ENCODE measurements at regions of chr11 and their contacts with region 1.

Region 1: GRCh38 chr11:9265211-9266131 is at the start of gene DENND5A:
- DNase-seq: peak; percentile 94
- H3K4me3 ChIP-seq: peak within 1 kb of the TSS; percentile 94 to 99 (median 98)
- H3K27ac ChIP-seq: peak within 1 kb of the TSS; percentile 93 to 99 (median 98)
- H3K4me1 ChIP-seq: peaks cover 0 to 35% (median 24%) of the 10 kb centered on the region in 4 donors
- H3K27me3 ChIP-seq: no peaks in the 10 kb centered on the region
- CTCF ChIP-seq: no peak
- EP300 ChIP-seq: no peak
- POLR2A ChIP-seq: peak in 1 of 2 donors; percentile 8
- total RNA-seq, gene DENND5A: 89.2 to 130 (median 95.1) TPM

Region 2: DNA sequence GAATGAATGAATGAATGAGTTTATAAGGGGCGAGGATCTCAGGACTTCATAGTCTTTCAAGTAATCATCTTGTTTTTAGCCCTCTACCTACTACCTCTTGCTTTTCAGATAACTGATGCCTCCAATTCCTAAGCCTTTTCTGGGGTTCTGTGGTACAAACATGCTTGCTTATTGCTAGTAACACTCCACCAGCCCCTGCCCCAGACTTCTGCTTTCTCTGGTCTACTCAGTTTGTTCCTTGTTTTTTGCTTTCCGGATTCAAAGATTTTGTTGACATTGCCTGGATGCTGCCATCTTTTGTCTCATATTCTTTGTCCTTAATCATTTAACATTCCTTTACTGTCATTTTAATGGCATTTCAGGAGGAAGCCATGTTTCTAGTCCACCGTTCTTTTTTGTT is 292.4 kb before region 1 on chr11:
- intact Hi-C with region 1: no loop called
- DNase-seq: no peak
- H3K4me3 ChIP-seq: no peak overlapping the region
- H3K27ac ChIP-seq: no peak overlapping the region
- H3K4me1 ChIP-seq: no peaks in the 10 kb centered on the region
- H3K27me3 ChIP-seq: no peaks in the 10 kb centered on the region
- CTCF ChIP-seq: no peak
- EP300 ChIP-seq: no peak
- POLR2A ChIP-seq: no peak

Region 3: DNA sequence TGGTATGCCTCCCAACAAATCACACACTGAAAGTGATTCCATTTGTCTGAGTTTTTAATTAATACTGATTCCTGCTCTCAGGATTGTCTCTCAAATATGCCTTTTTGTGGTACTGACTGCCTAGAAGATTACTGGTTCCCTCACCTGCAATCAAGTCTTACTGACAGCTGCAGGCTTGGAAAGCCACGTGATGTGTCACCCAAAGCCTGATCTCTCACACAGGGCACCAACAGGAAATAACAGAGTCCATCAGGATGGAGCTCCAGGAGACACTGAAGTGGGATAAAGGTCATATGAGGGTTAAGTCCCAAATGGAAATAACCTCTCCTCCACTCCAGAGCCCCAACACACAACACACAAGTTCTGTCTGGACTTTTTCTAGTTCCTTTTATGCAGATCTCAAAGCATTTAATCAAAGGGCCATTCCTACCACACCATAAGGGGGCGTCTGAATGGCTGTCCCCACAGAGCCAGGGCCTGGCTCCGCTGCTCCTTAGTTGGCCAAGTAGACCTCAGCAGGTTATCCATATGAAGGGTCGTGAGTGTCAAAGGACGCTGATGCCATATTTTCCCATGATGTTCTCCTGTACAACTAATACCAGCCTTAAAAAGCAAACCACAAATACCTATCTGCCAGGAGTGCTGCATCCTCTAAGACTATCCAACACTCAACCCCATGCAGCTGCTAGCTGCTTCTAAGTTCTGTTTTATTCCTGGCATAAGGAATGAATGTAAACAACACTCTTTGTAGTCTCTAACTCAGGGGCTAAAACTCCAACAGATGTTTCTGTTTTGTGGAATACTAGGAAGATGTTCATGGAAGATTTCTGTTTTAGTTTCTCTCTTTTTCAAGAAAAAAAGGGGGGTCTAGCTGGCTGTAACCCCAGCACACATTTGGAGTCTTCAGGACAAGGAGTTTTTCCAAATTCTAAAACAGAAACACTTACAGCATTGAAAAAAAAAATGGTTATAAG is 187.1 kb before region 1 on chr11:
- intact Hi-C with region 1: no loop called
- DNase-seq: no peak
- H3K4me3 ChIP-seq: no peak overlapping the region
- H3K27ac ChIP-seq: peak overlapping the region in 2 of 4 donors; percentile 49 to 74
- H3K4me1 ChIP-seq: peaks cover 0 to 37% (median 27%) of the 10 kb centered on the region in 4 donors
- H3K27me3 ChIP-seq: no peaks in the 10 kb centered on the region
- CTCF ChIP-seq: no peak
- EP300 ChIP-seq: no peak
- POLR2A ChIP-seq: no peak

Region 4: DNA sequence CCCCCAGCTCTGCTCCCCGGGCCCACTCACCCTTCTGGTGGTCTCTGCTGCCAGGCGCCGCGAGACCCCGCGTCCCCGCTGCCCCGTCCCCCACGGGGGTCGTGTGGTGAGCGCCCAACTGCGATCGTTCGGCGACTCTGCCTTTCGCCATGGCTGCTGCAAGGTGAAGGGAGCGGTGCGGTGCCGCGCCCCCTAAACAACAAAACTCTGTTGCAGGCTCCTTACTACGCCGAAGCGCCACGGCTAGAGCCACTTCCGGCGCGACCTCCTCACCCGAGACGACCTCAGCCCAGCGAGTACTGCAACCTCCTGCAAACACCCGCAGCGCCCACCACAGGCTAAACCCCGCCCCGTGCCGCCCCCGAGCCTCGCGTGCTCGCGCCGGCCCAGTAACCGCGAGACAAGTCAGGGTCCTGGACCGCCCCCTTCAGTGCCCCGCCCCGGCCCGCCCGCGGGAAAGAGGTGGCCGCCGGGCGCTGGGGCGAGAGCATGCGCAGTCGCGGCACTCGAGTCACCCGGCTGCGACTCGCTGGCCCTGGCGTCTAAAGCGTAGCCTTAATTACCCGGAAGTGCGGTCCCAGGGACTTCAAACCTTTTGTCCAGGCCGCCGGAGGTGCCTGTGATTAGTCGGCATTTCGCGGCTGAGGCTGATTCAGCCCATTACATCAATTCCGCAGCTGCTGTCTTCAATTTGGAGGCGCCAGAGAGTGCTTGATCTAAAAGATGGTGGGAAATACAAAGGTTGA is 49.0 kb after region 1 on chr11 and contains the start of gene TMEM41B:
- intact Hi-C with region 1: loop called (anchors 2 kb)
- DNase-seq: peak; percentile 98
- H3K4me3 ChIP-seq: peak within 1 kb of the TSS; percentile 72 to 100 (median 91)
- H3K27ac ChIP-seq: peak within 1 kb of the TSS; percentile 82 to 86 (median 84)
- H3K4me1 ChIP-seq: peaks cover 0 to 27% (median 16%) of the 10 kb centered on the region in 4 donors
- H3K27me3 ChIP-seq: no peaks in the 10 kb centered on the region
- CTCF ChIP-seq: no peak
- EP300 ChIP-seq: no peak
- POLR2A ChIP-seq: peak; percentile 65 to 69
- total RNA-seq, gene TMEM41B: 20.3 to 22.2 (median 20.5) TPM

Region 5: GRCh38 chr11:9363954-9364912 is 98.8 kb after region 1 on chr11:
- intact Hi-C with region 1: loop called (anchors 2 kb)
- DNase-seq: peak; percentile 98
- H3K4me3 ChIP-seq: peak overlapping the region; percentile 31 to 53 (median 46)
- H3K27ac ChIP-seq: peak overlapping the region; percentile 91 to 96 (median 95)
- H3K4me1 ChIP-seq: peaks cover 0 to 19% (median 15%) of the 10 kb centered on the region in 4 donors
- H3K27me3 ChIP-seq: no peaks in the 10 kb centered on the region
- CTCF ChIP-seq: no peak
- EP300 ChIP-seq: peak in 3 of 4 donors; percentile 67 to 77 (median 76)
- POLR2A ChIP-seq: peak in 1 of 2 donors; percentile 46

Region 6: GRCh38 chr11:9384535-9385303 is 119.2 kb after region 1 on chr11 and contains the start of gene IPO7:
- intact Hi-C with region 1: loop called (anchors 5 kb)
- DNase-seq: peak; percentile 95
- H3K4me3 ChIP-seq: peak within 1 kb of the TSS; percentile 87 to 94 (median 88)
- H3K27ac ChIP-seq: peak within 1 kb of the TSS; percentile 95 to 96 (median 96)
- H3K4me1 ChIP-seq: peaks cover 0 to 60% (median 43%) of the 10 kb centered on the region in 4 donors
- H3K27me3 ChIP-seq: no peaks in the 10 kb centered on the region
- CTCF ChIP-seq: peak in 1 of 4 experiments; percentile 8
- EP300 ChIP-seq: no peak
- POLR2A ChIP-seq: peak; percentile 81 to 84
- total RNA-seq, gene IPO7: 121 to 180 (median 145) TPM

Region 7: DNA sequence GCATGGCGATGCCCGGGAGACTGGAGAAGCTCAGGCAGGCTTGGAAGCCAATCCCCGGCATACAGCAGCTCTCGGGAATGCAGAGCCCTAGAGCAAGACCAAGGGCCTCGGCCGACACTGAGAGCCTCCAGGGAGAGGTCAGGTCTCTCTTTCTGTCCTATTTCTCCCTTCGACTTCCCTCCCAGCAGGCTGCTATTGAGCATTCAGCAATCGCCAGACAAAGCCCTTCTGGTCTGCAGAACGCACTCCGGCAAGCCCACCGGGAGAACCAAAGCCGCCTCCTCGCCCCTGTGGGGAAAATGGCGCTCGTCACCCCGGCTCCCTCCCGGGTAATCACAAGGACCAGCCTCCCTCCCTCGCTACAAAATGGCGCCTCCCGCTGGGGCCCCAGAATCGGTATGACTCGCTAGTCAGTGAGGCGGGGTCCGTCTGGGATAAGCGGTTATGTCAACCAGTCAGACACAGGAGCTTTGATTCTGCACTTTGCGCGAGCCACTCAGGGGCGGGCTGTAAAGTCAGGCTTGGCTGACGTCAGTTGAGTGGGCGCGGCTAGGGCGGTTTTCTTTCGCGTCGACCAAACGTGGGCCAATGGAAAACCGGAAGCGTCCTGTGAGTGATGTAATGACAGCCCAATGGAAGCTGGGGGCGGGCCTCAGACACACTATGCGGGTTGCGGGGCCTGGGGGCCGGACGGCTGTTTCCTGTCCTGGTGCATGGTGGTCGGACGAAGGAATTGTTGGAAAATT is 195.0 kb after region 1 on chr11 and contains the start of gene ZNF143:
- intact Hi-C with region 1: loop called (anchors 5 kb)
- DNase-seq: peak; percentile 100
- H3K4me3 ChIP-seq: peak within 1 kb of the TSS; percentile 68 to 95 (median 82)
- H3K27ac ChIP-seq: peak within 1 kb of the TSS; percentile 95 to 100 (median 100)
- H3K4me1 ChIP-seq: peaks cover 0 to 27% (median 20%) of the 10 kb centered on the region in 4 donors
- H3K27me3 ChIP-seq: no peaks in the 10 kb centered on the region
- CTCF ChIP-seq: peak in 2 of 4 experiments; percentile 4 to 28
- EP300 ChIP-seq: peak in 1 of 4 donors; percentile 8
- POLR2A ChIP-seq: peak; percentile 99
- total RNA-seq, gene ZNF143: 20.2 to 48.4 (median 32.4) TPM

Measured in sigmoid colon (tissue), 7 donors.